ENCODE measurements at regions of chr2 and their contacts with region 1.

Region 1: GRCh38 chr2:27202854-27203253 is 9.0 kb upstream of the ATRAID start:
- DNase-seq: peak; percentile 55
- H3K4me3 ChIP-seq: no peak overlapping the region
- H3K27ac ChIP-seq: no peak overlapping the region
- H3K4me1 ChIP-seq: peaks cover 15% of the 10 kb centered on the region
- H3K27me3 ChIP-seq: no peaks in the 10 kb centered on the region
- CTCF ChIP-seq: no peak

Region 2: DNA sequence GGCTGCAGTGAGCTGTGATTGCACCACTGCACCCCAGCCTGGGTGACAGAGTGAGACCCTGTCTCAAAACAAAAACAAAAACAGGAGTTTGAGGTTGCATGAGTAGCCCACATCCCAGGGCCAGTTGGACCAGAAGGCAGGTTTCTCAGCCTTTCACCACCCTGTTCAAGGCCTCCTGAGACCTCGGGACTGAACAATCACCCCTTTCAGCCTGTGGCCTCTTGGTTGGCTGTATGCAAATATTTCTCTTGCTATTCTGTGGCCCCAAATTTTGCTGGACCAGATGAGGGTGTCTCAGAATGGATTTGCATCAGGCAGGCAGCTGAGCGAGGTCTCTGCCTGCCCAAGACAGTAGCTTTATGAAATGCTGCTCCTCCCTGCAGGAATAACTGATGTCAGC is 298.0 kb before region 1 on chr2:
- CTCF ChIA-PET with region 1: no interaction called
- dilution Hi-C with region 1: no loop called
- in situ Hi-C with region 1: no loop called
- intact Hi-C with region 1: no loop called
- DNase-seq: no peak
- H3K4me3 ChIP-seq: no peak overlapping the region
- H3K27ac ChIP-seq: no peak overlapping the region
- H3K4me1 ChIP-seq: no peaks in the 10 kb centered on the region
- H3K27me3 ChIP-seq: peaks cover 1% of the 10 kb centered on the region
- CTCF ChIP-seq: no peak

Region 3: GRCh38 chr2:27152786-27153510 is 49.9 kb before region 1 on chr2:
- CTCF ChIA-PET with region 1: no interaction called
- dilution Hi-C with region 1: loop called (anchors 5 kb)
- in situ Hi-C with region 1: no loop called
- intact Hi-C with region 1: no loop called
- DNase-seq: peak; percentile 73
- H3K4me3 ChIP-seq: no peak overlapping the region
- H3K27ac ChIP-seq: no peak overlapping the region
- H3K4me1 ChIP-seq: peaks cover 10% of the 10 kb centered on the region
- H3K27me3 ChIP-seq: no peaks in the 10 kb centered on the region
- CTCF ChIP-seq: no peak

Region 4: DNA sequence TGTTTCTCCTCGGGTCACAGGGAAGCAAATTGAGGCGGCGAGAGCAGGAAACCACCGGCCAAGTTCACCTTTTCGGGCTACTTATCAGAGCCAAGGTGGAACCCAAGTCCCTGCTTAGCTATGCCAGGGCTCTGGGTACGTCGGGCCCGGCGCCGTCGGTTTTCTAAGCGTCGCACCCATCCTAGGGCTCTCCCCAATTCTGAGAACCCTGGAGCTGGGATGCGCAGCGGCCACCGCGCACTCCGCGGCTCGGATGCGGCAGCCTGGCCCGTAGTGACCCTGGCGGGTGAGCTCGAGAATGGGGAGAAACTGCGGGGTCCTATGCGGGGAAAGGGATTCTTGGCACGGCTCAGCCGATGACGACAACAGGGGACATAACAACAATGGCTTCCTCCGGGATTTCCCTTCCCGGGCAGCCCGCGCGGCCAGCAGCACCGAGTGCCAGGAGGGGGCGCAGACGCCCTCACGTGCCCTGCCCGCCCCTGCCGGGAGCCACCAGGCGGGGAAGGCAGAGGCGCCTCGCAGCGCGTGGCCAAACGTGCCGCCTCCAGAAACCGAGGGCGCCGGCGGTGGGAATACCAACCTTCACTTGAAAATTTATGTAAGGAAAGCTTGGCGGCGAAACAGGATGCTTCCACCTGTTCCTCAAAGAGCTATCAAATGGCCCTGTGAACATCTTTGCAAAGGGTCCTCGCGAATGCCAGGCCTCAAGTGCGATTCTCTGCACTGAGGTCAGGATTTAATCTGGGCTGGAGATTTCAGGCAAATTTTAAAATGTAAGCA is 62.1 kb after region 1 on chr2:
- CTCF ChIA-PET with region 1: no interaction called
- dilution Hi-C with region 1: loop called (anchors 5 kb)
- in situ Hi-C with region 1: no loop called
- intact Hi-C with region 1: no loop called
- DNase-seq: peak; percentile 39
- H3K4me3 ChIP-seq: no peak overlapping the region
- H3K27ac ChIP-seq: no peak overlapping the region
- H3K4me1 ChIP-seq: peaks cover 19% of the 10 kb centered on the region
- H3K27me3 ChIP-seq: peaks cover 48% of the 10 kb centered on the region
- CTCF ChIP-seq: peak; percentile 14 to 45

Measured in mammary epithelial cell (primary cell).